ENCODE measurements at regions of chr20 and their contacts with region 1.

Region 1: DNA sequence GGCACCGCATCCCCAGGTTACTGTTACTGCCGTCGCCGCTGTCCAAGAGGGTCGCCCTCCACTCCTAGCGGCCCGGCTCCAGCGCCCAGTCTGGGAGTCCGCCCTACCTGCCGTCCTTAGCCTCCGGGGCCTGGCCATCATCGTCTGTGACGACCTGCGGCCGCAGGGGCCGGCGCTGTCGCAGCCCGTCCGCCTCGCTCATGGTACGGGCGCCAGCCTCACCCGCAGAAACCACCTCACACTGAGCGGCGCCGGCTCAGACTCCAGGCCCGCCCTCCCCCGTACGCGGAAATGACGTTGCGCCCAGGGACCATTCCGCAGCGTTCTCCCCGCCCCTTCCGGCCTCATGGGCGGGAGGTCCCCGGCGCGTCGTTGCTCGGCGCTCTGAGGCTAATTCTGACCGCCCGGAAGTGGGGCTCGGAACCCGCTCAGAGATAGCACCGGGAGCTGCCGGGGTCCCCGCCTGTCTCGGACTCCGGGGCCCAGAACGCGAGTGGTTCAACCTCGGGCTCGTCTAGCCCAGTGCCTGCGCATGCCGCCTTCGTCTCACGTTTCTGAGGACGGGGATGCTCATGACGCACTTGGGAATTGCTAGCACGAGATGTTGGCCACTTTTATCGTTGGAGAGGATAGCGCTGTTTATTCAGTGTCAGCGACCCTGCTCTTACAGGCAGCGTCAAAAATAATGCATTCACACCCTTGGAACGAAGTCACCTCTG is at the start of gene APMAP:
- DNase-seq: peak; percentile 77
- ATAC-seq: peak; percentile 91
- H3K4me3 ChIP-seq: peak within 1 kb of the TSS; percentile 89 to 94
- H3K27ac ChIP-seq: peak within 1 kb of the TSS; percentile 71
- H3K4me1 ChIP-seq: peaks cover 12 to 28% of the 10 kb centered on the region in 2 experiments
- H3K27me3 ChIP-seq: peaks cover 1% of the 10 kb centered on the region; the same call in 1 of the 2 replicates
- CTCF ChIP-seq: no peak
- POLR2A ChIP-seq: peak; percentile 86
- RAD21 ChIP-seq: no peak
- total RNA-seq, gene APMAP: 82.7 TPM

Region 2: DNA sequence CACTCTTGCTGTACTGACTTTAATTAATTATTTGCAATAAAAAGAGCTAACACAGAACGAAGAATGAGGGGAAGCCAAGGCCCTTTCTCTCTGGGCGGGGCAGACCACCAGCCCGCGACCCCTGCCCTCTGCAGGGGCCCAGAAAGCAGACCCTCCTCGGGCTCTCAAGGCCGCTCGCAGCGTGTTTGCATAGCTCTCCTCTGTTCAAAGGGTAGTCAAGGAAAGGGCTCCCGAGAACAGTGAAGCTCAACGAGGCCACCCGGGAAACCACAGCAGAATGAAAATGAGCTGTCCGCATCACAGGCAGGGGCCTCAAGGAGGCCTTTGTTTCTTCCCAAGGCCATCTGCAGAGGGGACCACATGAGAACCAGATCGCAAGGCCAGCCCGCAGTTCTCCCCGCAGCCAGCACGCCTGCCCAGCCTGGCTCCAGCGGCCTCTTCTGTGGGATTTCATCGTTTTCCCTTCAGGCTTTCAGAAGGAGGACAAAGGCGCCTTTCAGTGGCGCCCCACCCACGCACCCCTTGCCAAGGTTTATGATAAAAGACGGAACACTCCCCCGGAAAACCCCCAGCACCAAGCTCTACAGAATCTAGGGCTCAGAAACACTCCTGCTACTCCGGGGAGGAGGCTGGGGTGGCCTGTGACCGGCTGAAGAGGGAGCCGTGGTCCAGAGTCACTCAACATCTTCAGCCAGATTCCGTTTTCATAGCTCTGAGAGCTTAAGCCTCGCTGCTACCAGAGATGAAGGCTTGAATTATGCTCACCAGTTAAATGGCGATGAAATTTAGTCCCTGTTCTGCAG is 40.0 kb after region 1 on chr20:
- CTCF ChIA-PET with region 1: no interaction called
- POLR2A ChIA-PET with region 1: no interaction called
- RAD21 ChIA-PET with region 1: no interaction called
- intact Hi-C with region 1: no loop called
- DNase-seq: no peak
- ATAC-seq: no peak
- H3K4me3 ChIP-seq: no peak overlapping the region
- H3K27ac ChIP-seq: no peak overlapping the region
- H3K4me1 ChIP-seq: no peaks in the 10 kb centered on the region
- H3K27me3 ChIP-seq: no peaks in the 10 kb centered on the region
- CTCF ChIP-seq: no peak
- POLR2A ChIP-seq: no peak
- RAD21 ChIP-seq: no peak

Region 3: DNA sequence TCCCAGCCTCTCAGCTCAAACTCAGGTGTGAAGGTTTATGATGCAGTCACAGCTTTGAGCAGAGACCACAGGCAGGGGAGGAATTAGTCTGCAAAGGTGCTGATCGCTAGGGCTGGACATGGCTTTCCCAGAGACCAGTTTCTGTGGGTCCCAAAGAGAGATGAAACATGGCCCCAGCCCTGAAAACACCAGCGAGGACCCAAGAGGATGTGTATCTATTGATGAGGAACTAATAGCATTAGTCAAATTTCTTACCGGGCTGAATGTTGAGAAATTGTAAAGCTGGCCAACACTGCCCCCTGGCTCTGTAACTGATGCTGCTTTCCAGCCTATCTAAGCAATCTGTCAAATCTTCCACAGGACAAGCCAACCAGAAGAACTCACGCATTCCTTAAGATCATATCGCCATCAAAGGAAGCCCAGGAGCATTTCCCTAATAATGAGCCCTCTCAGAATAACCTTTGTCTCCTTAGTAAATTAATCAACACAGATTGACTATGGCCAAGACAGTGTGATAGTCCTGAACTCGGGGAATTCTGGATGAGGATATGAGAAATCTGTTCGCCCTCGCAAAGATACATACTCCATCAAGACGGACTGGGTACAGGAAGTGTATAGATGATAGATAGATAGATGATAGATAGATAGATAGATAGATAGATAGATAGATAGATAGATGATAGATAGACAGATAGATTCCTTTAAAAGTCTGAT is 73.1 kb after region 1 on chr20:
- CTCF ChIA-PET with region 1: interaction called, 31 read pairs
- POLR2A ChIA-PET with region 1: no interaction called
- RAD21 ChIA-PET with region 1: interaction called, 3 to 4 read pairs
- intact Hi-C with region 1: loop called (anchors 1 kb)
- DNase-seq: peak; percentile 31
- ATAC-seq: peak; percentile 82
- H3K4me3 ChIP-seq: no peak overlapping the region
- H3K27ac ChIP-seq: no peak overlapping the region
- H3K4me1 ChIP-seq: no peaks in the 10 kb centered on the region
- H3K27me3 ChIP-seq: peaks cover 64% of the 10 kb centered on the region
- CTCF ChIP-seq: peak; percentile 61 to 75 (median 74)
- POLR2A ChIP-seq: no peak
- RAD21 ChIP-seq: peak; percentile 80

Region 4: GRCh38 chr20:25195014-25195961 is 202.6 kb after region 1 on chr20 and contains the start of gene ENTPD6:
- CTCF ChIA-PET with region 1: no interaction called
- POLR2A ChIA-PET with region 1: no interaction called
- RAD21 ChIA-PET with region 1: no interaction called
- intact Hi-C with region 1: loop called (anchors 5 kb)
- DNase-seq: peak; percentile 61
- ATAC-seq: peak; percentile 82
- H3K4me3 ChIP-seq: peak within 1 kb of the TSS; percentile 74 to 99
- H3K27ac ChIP-seq: peak within 1 kb of the TSS; percentile 80
- H3K4me1 ChIP-seq: peaks cover 9 to 25% of the 10 kb centered on the region in 2 experiments; a peak in 3 of 4 replicates
- H3K27me3 ChIP-seq: no peaks in the 10 kb centered on the region
- CTCF ChIP-seq: peak in 2 of 3 experiments; percentile 12; a peak in 1 of 6 replicates
- POLR2A ChIP-seq: peak; percentile 78
- RAD21 ChIP-seq: no peak
- total RNA-seq, gene ENTPD6: 89.2 TPM

Region 5: GRCh38 chr20:25310268-25310920 is 317.7 kb after region 1 on chr20:
- CTCF ChIA-PET with region 1: no interaction called
- POLR2A ChIA-PET with region 1: no interaction called
- RAD21 ChIA-PET with region 1: no interaction called
- intact Hi-C with region 1: loop called (anchors 5 kb)
- DNase-seq: peak; percentile 73
- ATAC-seq: peak; percentile 76
- H3K4me3 ChIP-seq: peak overlapping the region; percentile 25 to 53
- H3K27ac ChIP-seq: peak overlapping the region; percentile 79
- H3K4me1 ChIP-seq: peaks cover 37 to 43% of the 10 kb centered on the region in 2 experiments
- H3K27me3 ChIP-seq: no peaks in the 10 kb centered on the region
- CTCF ChIP-seq: peak; percentile 50 to 64 (median 63); a peak in 5 of 6 replicates
- POLR2A ChIP-seq: no peak
- RAD21 ChIP-seq: peak; percentile 83

Region 6: DNA sequence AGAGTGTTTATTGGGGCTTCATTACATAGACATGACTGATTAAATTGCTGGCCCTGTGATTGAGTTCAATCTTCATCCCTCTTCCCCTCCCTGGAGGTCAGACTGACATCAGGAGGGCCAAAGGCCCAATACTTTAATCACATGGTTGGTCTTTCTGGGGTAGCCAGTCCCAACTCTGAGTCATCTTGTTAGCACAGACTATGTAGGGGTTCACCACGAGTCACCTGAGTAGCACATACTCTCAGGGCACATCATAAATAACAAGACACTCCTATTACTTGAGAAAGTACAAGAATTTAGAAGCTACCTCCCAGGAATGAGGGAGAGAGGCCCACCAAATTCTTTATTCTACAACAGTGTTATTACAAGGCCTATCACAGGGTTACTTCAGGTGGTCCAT is 426.1 kb after region 1 on chr20:
- CTCF ChIA-PET with region 1: no interaction called
- POLR2A ChIA-PET with region 1: no interaction called
- RAD21 ChIA-PET with region 1: no interaction called
- intact Hi-C with region 1: loop called (anchors 5 kb)
- DNase-seq: no peak
- ATAC-seq: peak; percentile 38; the same call in 1 of the 2 replicates
- H3K4me3 ChIP-seq: no peak overlapping the region
- H3K27ac ChIP-seq: no peak overlapping the region
- H3K4me1 ChIP-seq: peaks cover 0 to 9% of the 10 kb centered on the region in 2 experiments; a peak in 1 of 4 replicates
- H3K27me3 ChIP-seq: no peaks in the 10 kb centered on the region
- CTCF ChIP-seq: no peak
- POLR2A ChIP-seq: no peak
- RAD21 ChIP-seq: no peak